ENCODE measurements at regions of chr20 and their contacts with region 1.

Region 1: DNA sequence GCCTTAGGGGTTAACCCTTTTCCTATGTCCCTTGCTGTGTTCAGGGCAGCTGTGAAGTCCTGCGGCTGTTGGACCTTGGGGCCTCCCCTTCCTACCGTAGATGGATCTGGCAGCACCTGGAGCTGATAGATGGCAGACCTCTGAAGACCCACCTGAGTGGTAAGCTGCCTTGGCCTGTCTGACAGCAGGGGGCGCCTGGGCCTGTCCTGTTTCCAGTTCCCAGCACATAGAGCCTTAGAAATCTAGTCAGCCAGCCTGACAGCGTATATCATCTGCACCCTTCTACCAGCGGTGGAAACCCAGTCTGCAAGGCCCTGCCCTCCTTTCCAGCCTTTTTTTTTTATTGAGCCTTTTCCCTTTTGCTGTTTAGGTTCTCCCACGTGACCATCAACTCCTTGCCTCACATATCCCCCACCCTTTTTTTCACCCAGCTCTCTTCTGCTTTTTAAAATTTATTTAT is 26.6 kb downstream of the CNBD2 start:
- DNase-seq: peak; percentile 91
- ATAC-seq: peak; percentile 88
- H3K4me3 Mint-ChIP-seq: no peak overlapping the region
- H3K27ac Mint-ChIP-seq: no peak overlapping the region
- H3K4me1 Mint-ChIP-seq: peaks cover 3% of the 10 kb centered on the region
- H3K27me3 Mint-ChIP-seq: peaks cover 2% of the 10 kb centered on the region
- CTCF ChIP-seq: peak; percentile 84

Region 2: DNA sequence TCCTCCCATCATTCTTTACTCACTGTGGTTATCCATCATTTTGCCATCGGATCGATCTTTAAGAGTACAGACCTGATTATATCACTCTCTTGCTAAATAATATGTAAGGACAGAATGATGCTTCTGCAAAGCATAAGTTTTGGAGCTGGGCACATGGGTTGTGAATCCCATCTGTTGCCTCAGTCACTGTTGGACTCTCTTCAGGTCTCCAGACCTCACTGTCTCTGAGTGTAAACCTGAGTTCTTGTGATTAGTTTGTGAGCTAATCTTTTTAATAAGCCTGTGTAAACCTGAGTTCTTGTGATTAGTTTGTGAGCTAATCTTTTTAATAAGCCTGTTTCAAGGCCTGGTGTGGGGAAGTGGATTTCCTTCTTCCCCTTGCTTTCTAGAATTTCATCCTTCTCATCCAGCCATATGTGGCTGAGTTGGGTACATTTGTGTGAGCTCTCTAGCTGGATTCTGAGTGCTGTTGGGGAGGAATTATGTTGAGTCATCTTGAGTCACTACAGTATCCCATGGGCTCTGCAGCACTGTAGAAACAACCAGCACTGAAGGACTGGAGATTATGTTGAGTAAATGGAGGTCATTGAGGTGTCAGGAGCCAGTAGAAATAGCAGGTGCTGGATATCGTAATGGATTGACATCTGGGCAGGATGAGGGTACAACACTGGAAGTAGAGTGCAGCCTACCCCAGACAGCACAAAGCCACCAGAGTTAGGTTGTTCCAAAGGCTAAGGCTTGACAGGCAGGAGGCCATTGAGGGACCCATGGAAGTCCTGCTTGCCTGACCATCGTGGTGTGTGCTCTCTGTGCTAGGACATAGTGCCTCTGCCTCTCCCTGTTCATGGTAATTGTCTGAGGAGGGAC is 93.1 kb before region 1 on chr20:
- CTCF ChIA-PET with region 1: no interaction called
- POLR2A ChIA-PET with region 1: no interaction called
- intact Hi-C with region 1: no loop called
- DNase-seq: no peak
- ATAC-seq: no peak
- H3K4me3 Mint-ChIP-seq: no peak overlapping the region
- H3K27ac Mint-ChIP-seq: peak overlapping the region; percentile 29
- H3K4me1 Mint-ChIP-seq: peaks cover 7% of the 10 kb centered on the region
- H3K27me3 Mint-ChIP-seq: no peaks in the 10 kb centered on the region
- CTCF ChIP-seq: no peak

Region 3: DNA sequence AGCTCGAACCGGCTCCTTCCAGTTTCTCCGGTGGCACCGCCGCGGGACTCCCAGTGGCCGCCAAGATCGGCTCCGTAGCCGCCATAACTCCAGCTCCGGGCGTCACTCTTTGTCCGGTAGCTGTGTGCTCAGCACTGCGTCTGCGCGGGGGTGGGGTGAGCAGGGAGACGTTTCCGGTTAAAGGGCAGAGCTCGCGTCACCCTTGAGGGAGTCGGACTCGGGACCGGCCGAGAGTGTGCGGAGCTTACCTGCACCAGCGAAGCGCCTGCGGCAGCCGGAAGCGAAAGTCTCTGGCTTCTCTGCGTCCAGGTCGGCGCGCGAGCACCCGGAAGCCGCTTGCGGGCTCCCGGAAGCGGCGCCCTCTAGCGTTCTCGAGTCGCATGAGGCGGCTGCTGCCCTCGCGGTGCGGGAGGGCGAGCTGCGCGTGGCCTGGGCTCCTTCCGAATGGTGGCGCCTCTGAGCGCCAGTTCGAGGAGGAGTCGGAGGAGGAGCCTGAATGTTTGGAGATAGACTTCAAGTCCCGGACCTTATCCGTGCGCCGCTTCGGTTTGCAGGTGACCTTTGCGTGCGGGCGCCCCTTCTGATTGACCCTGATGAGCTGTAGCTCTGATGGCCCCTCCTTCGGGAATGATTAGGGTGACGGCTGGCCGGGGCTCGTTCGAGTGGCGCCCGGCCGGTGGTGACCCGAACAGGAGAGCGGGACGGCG is 40.7 kb before region 1 on chr20 and contains the start of gene SCAND1:
- CTCF ChIA-PET with region 1: interaction called, 42 read pairs
- POLR2A ChIA-PET with region 1: no interaction called
- intact Hi-C with region 1: no loop called
- DNase-seq: peak; percentile 99
- ATAC-seq: peak; percentile 89
- H3K4me3 Mint-ChIP-seq: peak within 1 kb of the TSS; percentile 98
- H3K27ac Mint-ChIP-seq: peak within 1 kb of the TSS; percentile 100
- H3K4me1 Mint-ChIP-seq: peaks cover 16% of the 10 kb centered on the region
- H3K27me3 Mint-ChIP-seq: no peaks in the 10 kb centered on the region
- CTCF ChIP-seq: peak; percentile 93
- total RNA-seq, gene SCAND1: 46.4 to 49.2 TPM

Region 4: GRCh38 chr20:35984382-35984781 is 10.6 kb before region 1 on chr20:
- CTCF ChIA-PET with region 1: interaction called, 69 read pairs
- POLR2A ChIA-PET with region 1: no interaction called
- intact Hi-C with region 1: no loop called
- DNase-seq: no peak
- ATAC-seq: no peak
- H3K4me3 Mint-ChIP-seq: no peak overlapping the region
- H3K27ac Mint-ChIP-seq: no peak overlapping the region
- H3K4me1 Mint-ChIP-seq: no peaks in the 10 kb centered on the region
- H3K27me3 Mint-ChIP-seq: no peaks in the 10 kb centered on the region
- CTCF ChIP-seq: no peak

Region 5: GRCh38 chr20:36018208-36018988 is 23.4 kb after region 1 on chr20:
- CTCF ChIA-PET with region 1: interaction called, 13 read pairs
- POLR2A ChIA-PET with region 1: no interaction called
- intact Hi-C with region 1: no loop called
- DNase-seq: no peak
- ATAC-seq: no peak
- H3K4me3 Mint-ChIP-seq: no peak overlapping the region
- H3K27ac Mint-ChIP-seq: no peak overlapping the region
- H3K4me1 Mint-ChIP-seq: no peaks in the 10 kb centered on the region
- H3K27me3 Mint-ChIP-seq: peaks cover 2% of the 10 kb centered on the region
- CTCF ChIP-seq: no peak

Region 6: GRCh38 chr20:36132802-36133211 is 137.8 kb after region 1 on chr20:
- CTCF ChIA-PET with region 1: interaction called, 339 read pairs
- POLR2A ChIA-PET with region 1: interaction called, 3 read pairs
- intact Hi-C with region 1: loop called (anchors 1 kb)
- DNase-seq: no peak
- ATAC-seq: no peak
- H3K4me3 Mint-ChIP-seq: no peak overlapping the region
- H3K27ac Mint-ChIP-seq: no peak overlapping the region
- H3K4me1 Mint-ChIP-seq: no peaks in the 10 kb centered on the region
- H3K27me3 Mint-ChIP-seq: no peaks in the 10 kb centered on the region
- CTCF ChIP-seq: no peak

Region 7: GRCh38 chr20:36154700-36155628 is 159.9 kb after region 1 on chr20 and contains the start of gene EPB41L1:
- CTCF ChIA-PET with region 1: interaction called, 15 read pairs
- POLR2A ChIA-PET with region 1: no interaction called
- intact Hi-C with region 1: no loop called
- DNase-seq: peak; percentile 17
- ATAC-seq: no peak
- H3K4me3 Mint-ChIP-seq: peak within 1 kb of the TSS; percentile 45
- H3K27ac Mint-ChIP-seq: no peak within 1 kb of the TSS
- H3K4me1 Mint-ChIP-seq: peaks cover 5% of the 10 kb centered on the region
- H3K27me3 Mint-ChIP-seq: peaks cover 16% of the 10 kb centered on the region
- CTCF ChIP-seq: no peak
- total RNA-seq, gene EPB41L1: 1.0 to 2.2 TPM

Region 8: DNA sequence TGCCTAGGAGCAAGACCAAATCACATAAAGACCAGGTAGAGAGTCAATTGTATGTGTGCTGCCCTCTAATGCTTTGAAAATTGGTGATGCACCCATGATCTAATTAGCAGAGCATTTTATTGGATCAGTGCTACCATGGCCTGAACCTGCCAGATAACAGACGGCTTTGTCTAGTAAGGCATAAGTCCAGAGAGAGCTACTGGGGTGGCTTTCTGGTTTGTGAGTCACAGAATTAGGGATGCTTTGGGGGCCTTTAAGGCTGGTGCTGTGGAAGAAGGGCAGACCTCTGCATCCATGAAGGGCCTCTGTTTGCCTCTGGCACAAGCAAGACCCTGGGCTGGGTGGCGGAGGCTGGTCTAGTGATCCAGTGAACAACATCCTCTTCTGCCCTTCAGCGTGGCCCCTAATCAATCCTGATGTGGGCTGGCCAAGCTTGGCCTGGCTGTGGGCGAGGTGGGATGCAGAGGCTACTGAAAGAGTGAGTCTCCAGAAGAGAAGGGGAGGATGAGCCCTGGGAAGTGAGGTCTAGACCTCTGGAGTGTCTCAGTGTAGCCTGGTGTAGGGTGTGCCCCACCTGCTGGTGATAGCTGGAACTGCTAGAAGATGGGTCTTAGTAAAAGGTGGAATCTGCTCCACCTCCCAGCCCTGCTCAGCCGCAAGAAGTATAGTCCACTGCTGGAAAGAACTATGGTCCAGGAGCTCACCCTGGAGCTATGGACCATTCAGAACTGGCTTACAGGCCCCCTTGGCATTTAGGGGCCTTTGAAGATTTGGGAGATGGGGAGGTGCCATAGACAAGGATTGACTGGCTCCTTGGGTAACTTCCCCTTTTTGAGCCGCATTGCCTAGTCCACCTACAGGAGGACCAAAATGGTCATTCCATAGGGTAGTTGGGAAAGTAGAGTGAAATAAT is 204.6 kb after region 1 on chr20:
- CTCF ChIA-PET with region 1: interaction called, 73 read pairs
- POLR2A ChIA-PET with region 1: no interaction called
- intact Hi-C with region 1: loop called (anchors 2 kb)
- DNase-seq: peak; percentile 90
- ATAC-seq: peak; percentile 91
- H3K4me3 Mint-ChIP-seq: no peak overlapping the region
- H3K27ac Mint-ChIP-seq: no peak overlapping the region
- H3K4me1 Mint-ChIP-seq: no peaks in the 10 kb centered on the region
- H3K27me3 Mint-ChIP-seq: no peaks in the 10 kb centered on the region
- CTCF ChIP-seq: peak; percentile 96

Region 9: GRCh38 chr20:36248836-36249235 is 253.8 kb after region 1 on chr20:
- CTCF ChIA-PET with region 1: no interaction called
- POLR2A ChIA-PET with region 1: no interaction called
- intact Hi-C with region 1: no loop called
- DNase-seq: no peak
- ATAC-seq: no peak
- H3K4me3 Mint-ChIP-seq: no peak overlapping the region
- H3K27ac Mint-ChIP-seq: no peak overlapping the region
- H3K4me1 Mint-ChIP-seq: peaks cover 32% of the 10 kb centered on the region
- H3K27me3 Mint-ChIP-seq: no peaks in the 10 kb centered on the region
- CTCF ChIP-seq: no peak